ENCODE measurements at regions of chr9 and their contacts with region 1.

Region 1: GRCh38 chr9:77841739-77842386 is 189.7 kb downstream of the GNAQ start:
- DNase-seq: peak; percentile 16
- ATAC-seq: no peak; the same call in none of the 2 replicates
- H3K4me3 ChIP-seq: no peak overlapping the region
- H3K27ac ChIP-seq: no peak overlapping the region
- H3K4me1 ChIP-seq: peaks cover 9% of the 10 kb centered on the region
- H3K27me3 ChIP-seq: no peaks in the 10 kb centered on the region
- CTCF ChIP-seq: peak; percentile 48; the same call in 1 of the 2 replicates

Region 2: DNA sequence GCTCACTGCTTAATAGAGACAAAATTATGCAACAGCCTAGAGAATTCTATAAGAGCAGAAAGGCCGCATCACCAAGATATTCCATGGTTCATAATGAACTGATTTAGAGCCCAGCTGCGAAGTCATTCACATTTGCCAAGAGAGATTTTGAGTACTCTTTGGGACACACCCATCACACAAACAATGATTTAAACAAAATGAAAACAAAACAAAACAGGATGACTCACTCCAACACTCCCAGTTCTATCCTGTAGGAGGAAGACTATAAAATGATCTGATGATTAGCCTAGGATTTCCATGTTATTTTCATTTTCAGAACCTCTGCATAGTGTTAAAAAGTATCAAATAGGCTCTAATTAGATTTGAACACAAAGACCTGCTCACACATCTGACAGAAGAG is 48.0 kb before region 1 on chr9:
- CTCF ChIA-PET with region 1: no interaction called
- POLR2A ChIA-PET with region 1: no interaction called
- intact Hi-C with region 1: loop called (anchors 5 kb)
- DNase-seq: peak; percentile 62
- ATAC-seq: peak; percentile 80
- H3K4me3 ChIP-seq: no peak overlapping the region
- H3K27ac ChIP-seq: no peak overlapping the region
- H3K4me1 ChIP-seq: peaks cover 12% of the 10 kb centered on the region
- H3K27me3 ChIP-seq: no peaks in the 10 kb centered on the region
- CTCF ChIP-seq: no peak; the same call in 1 of the 2 replicates